Calu3 (cell line): ENCODE measurements at regions of chr17 and their contacts with region 1.

Region 1: DNA sequence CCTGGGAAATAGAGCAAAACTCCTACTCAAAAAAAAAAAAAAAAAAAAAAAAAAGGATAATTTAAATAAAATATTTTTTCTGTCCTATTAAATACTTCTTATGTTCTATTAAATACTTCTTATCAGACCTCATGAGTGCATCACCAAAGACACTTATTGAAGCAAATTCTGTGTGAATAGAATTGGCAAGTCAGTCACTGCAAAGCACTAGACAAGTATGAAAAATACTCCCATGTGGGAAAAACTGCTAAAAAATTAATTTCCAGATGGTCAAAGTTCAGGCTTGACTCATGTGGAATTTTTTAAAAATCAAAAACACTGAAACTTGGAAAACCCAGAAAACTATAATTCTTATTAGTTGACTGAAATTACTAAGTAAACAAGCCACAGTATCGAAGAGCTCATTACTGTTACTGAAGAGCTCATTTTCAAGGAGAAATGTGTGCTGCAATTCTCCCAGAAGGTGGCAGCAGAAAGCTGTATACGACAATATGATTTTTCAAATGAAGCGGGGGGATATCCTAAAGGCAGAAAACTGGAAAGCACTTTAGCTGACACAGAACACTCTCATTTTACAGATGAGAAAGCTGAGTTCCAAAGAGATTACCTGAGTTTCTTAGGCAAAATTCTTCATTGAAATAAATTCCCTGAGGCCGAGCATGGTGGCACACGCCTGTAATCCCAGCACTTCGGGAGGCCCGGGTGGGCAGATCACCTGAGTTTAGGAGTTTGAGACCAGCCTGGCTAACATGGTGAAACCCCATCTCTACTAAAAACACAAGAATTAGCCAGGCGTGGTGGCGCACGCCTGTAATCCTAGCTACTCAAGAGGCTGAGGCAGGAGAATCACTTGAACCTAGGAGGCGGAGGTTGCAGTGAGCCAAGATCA is 15.9 kb upstream of the FBXO47 start:
- DNase-seq: peak; percentile 85
- H3K4me3 Mint-ChIP-seq: no peak overlapping the region
- H3K27ac Mint-ChIP-seq: no peak overlapping the region
- H3K4me1 Mint-ChIP-seq: no peaks in the 10 kb centered on the region
- H3K27me3 Mint-ChIP-seq: peaks cover 44% of the 10 kb centered on the region
- CTCF ChIP-seq: peak; percentile 98

Region 2: GRCh38 chr17:37239690-37240334 is 1743.3 kb before region 1 on chr17:
- CTCF ChIA-PET with region 1: interaction called, 21 read pairs
- intact Hi-C with region 1: loop called (anchors 1 kb)
- DNase-seq: no peak
- H3K4me3 Mint-ChIP-seq: no peak overlapping the region
- H3K27ac Mint-ChIP-seq: no peak overlapping the region
- H3K4me1 Mint-ChIP-seq: peaks cover 11% of the 10 kb centered on the region
- H3K27me3 Mint-ChIP-seq: no peaks in the 10 kb centered on the region
- CTCF ChIP-seq: peak; percentile 94

Region 3: DNA sequence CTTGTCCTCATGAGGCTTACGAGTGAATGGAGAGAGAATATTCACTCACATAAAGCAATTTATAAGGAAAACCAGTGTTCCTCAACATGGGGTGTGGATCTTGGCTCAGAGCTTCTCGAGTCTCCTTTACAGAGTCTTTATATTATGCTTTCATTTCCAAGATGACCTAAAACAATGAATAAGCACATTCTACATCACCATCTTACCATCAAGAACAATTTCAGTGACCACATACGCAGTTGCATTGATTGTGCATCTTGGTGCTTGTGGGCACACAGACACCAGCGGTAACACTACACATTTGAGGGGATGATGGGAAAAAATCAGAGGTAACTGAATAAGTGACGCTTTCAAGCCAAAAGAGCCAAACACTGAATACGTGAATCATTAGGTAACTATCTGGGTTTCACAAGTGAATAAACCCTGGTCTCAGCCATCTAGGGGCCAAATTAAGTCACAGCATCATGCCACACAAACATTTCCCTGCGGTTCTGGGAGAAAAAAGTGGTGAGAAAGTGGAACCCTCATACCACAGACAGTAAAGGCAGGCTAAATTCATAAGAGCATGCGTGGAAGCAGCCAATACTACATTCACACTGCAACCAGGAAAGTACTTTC is 167.4 kb before region 1 on chr17:
- CTCF ChIA-PET with region 1: no interaction called
- intact Hi-C with region 1: no loop called
- DNase-seq: no peak
- H3K4me3 Mint-ChIP-seq: no peak overlapping the region
- H3K27ac Mint-ChIP-seq: no peak overlapping the region
- H3K4me1 Mint-ChIP-seq: no peaks in the 10 kb centered on the region
- H3K27me3 Mint-ChIP-seq: no peaks in the 10 kb centered on the region
- CTCF ChIP-seq: peak; percentile 55

Region 4: DNA sequence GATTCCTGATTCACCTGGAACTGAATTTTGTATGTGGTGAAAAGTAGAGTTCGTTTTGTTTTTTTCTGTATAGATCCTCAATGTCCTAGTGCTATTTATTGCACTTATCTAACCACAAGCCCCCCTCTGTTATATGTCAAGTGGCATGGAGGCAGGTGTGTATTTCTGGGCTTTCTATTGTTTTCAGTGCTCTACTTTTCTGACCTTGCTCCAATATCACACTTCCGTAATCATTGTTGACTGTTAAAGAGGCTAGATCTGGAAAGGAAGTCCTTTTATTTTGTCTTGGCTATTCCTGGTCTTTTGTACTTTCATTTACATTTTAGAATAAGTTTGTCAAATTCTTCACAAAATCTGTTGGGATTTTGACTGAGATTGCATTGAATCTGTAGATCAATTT is 10.9 kb after region 1 on chr17:
- CTCF ChIA-PET with region 1: interaction called, 29 read pairs
- intact Hi-C with region 1: no loop called
- DNase-seq: no peak
- H3K4me3 Mint-ChIP-seq: no peak overlapping the region
- H3K27ac Mint-ChIP-seq: no peak overlapping the region
- H3K4me1 Mint-ChIP-seq: no peaks in the 10 kb centered on the region
- H3K27me3 Mint-ChIP-seq: peaks cover 11% of the 10 kb centered on the region
- CTCF ChIP-seq: no peak

Region 5: GRCh38 chr17:39036014-39036413 is 52.9 kb after region 1 on chr17:
- CTCF ChIA-PET with region 1: interaction called, 30 read pairs
- intact Hi-C with region 1: no loop called
- DNase-seq: peak; percentile 61
- H3K4me3 Mint-ChIP-seq: no peak overlapping the region
- H3K27ac Mint-ChIP-seq: no peak overlapping the region
- H3K4me1 Mint-ChIP-seq: peaks cover 9% of the 10 kb centered on the region
- H3K27me3 Mint-ChIP-seq: peaks cover 80% of the 10 kb centered on the region
- CTCF ChIP-seq: no peak

Region 6: DNA sequence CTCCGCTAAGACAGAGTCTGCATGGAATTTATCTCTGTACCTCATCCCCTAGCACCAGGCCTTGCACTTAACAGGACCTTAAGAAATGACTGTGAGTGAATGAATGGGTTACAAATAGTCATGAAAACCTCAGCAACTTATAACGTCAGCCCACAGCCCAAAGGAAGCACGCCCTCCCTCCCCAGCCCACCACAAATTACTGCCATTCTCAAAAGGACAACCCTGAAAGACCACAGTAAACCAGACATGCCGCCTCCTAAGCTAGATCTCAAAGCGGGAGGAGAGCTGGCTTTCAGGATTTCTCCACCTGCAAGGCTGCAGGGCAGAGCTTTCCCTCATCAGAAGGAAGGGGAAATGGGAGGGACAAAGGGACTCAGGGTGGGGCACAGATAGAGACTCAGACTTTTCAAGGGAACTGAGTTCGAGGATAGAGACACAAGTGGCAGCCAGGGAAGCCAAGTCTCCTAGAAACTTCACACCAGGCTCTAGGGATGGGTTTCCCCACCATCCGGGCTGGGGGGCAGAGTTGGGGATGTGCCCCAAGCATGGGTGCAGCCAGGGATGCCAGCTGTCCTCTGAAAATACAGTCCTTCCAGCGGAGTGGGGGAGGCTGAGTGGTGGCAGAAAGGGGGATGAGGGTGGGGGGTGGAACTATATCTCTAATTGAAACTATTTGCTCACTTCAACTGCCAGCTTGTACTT is 111.7 kb after region 1 on chr17:
- CTCF ChIA-PET with region 1: interaction called, 10 read pairs
- intact Hi-C with region 1: no loop called
- DNase-seq: no peak
- H3K4me3 Mint-ChIP-seq: no peak overlapping the region
- H3K27ac Mint-ChIP-seq: no peak overlapping the region
- H3K4me1 Mint-ChIP-seq: no peaks in the 10 kb centered on the region
- H3K27me3 Mint-ChIP-seq: peaks cover 75% of the 10 kb centered on the region
- CTCF ChIP-seq: no peak

Region 7: DNA sequence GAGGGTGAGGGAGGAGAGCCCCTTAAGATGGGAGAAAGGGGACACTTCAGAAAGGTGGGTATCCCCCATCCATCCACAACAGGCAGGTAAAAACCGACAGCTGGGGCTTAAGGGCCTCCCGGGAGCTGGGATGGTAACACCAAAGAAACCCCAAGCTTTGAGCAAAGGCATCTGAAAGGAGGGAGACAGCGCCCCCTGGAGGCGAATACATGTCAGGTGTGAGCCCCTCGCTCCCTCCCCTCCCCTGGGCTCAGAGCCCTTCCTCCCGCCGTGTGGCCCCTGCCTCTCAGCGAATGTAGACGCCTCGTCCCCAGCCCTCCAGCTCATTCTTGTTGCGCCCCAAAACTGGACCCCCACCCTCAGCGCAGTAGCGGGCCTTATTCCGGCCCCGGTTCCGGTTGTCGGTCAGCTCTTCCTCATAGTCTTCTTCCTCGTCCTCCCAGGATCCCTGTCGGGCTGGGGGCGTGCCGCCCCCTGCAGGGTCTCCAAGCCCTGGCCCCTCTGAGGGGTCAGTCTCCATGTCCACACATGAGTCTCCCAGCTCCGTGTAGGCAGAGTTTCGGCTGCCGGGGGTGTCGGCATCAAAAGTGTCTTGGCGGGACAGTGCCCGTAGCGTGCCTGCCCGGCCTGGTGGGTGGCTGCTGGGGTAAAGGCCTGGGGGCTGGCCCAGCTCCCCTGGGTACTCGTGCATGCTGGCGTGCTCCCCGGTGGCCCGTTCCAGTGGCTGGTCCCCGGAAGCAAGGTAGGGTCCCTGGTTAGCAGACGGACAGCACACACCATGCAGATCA is 192.0 kb after region 1 on chr17:
- CTCF ChIA-PET with region 1: interaction called, 38 read pairs
- intact Hi-C with region 1: no loop called
- DNase-seq: peak; percentile 92
- H3K4me3 Mint-ChIP-seq: no peak overlapping the region
- H3K27ac Mint-ChIP-seq: no peak overlapping the region
- H3K4me1 Mint-ChIP-seq: peaks cover 16% of the 10 kb centered on the region
- H3K27me3 Mint-ChIP-seq: no peaks in the 10 kb centered on the region
- CTCF ChIP-seq: peak; percentile 100

Region 8: DNA sequence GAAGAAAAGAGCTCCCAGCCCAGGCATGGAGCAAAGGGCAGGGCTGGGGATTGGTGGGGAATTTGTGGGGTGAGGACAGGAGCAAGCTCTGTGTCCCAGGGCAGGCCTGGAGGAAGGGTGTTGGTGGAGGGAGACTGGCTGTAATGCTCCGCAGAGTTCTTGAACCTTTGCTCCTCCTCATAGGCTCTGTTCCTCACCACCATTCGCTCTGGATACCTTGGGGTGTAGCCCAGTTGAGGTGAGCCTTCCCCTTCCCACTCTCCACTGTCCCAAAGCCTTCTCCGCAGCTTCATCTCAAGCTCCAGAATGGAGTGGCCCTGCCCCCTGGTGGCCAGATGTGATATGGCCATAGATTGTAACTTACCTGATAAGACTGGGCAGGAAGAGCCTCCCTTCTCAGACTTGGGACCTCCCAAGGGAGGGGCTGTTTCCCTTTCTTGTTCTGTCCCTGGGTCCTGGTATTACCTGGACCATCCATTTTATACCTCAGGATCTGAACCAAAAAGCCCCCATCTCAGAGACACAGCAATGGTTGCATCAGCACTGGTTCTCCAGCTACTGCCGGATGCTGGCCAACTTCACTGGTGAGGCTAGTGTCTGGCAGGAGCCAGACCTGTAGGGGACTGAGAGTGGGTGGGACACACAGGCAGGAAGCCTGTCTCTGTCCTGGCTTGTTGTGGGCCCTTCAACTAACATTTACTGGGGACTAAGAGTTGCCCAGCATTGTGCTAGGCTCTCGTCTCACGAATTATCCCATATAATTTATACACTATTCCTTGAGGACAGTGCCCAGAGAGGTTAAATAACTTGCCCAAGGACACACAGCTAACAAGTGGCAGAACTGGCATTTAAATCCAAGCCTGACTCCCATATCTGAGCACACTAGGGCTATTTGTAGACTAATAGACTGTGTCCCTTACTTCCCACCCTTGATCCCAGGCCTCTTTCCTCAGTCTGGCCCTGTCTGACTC is 261.8 kb after region 1 on chr17:
- CTCF ChIA-PET with region 1: interaction called, 72 read pairs
- intact Hi-C with region 1: loop called (anchors 1 kb)
- DNase-seq: peak; percentile 100
- H3K4me3 Mint-ChIP-seq: no peak overlapping the region
- H3K27ac Mint-ChIP-seq: peak overlapping the region; percentile 3
- H3K4me1 Mint-ChIP-seq: peaks cover 15% of the 10 kb centered on the region
- H3K27me3 Mint-ChIP-seq: peaks cover 26% of the 10 kb centered on the region
- CTCF ChIP-seq: peak; percentile 100